ENCODE measurements at regions of chr18 and their contacts with region 1.

Region 1: GRCh38 chr18:35158728-35159450 is 81.9 kb upstream of the ZNF397 start:
- DNase-seq: peak; percentile 77
- H3K4me3 Mint-ChIP-seq: peak overlapping the region; percentile 30
- H3K27ac Mint-ChIP-seq: peak overlapping the region; percentile 88
- H3K4me1 Mint-ChIP-seq: peaks cover 24% of the 10 kb centered on the region
- H3K27me3 Mint-ChIP-seq: no peaks in the 10 kb centered on the region

Region 2: DNA sequence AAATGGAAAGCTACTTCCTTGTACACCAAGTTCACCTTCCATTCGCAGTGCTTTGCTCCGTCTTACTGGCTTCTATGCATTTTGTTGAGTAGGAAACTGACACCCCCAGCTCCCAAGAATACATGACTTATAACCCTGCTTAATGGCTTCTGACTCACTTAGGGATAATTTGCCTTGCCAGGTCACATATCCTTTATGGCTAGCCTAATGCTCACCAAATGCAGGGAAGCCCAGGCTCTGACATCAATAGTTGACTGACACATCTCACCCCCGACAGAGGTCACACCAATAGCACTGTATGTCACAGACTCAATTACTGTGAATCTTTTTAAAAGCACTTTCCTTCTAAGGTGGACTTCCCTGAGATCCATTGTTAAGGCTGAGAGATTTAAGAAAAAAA is 301.6 kb before region 1 on chr18:
- intact Hi-C with region 1: loop called (anchors 1 kb)
- DNase-seq: no peak
- H3K4me3 Mint-ChIP-seq: no peak overlapping the region
- H3K27ac Mint-ChIP-seq: no peak overlapping the region
- H3K4me1 Mint-ChIP-seq: peaks cover 7% of the 10 kb centered on the region
- H3K27me3 Mint-ChIP-seq: peaks cover 32% of the 10 kb centered on the region

Region 3: DNA sequence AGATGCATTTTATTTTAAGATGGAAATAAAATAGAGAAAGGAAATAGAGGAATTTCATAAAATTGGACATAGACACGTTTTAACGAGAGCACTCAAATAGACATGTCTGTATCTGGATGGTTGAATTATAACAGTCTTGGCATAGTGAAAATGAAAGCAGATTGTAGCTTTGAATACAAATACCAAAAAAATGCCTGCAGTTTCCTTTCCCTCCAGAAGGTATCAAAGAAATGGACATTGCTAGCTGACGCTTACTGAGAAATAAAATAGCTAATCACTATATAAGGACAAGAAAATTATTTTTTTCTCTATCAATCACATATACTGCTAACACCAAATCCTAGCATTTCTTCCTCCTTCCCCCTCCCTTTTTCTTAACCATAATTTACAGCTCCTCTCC is 129.1 kb before region 1 on chr18:
- intact Hi-C with region 1: loop called (anchors 5 kb)
- DNase-seq: no peak
- H3K4me3 Mint-ChIP-seq: peak overlapping the region; percentile 89
- H3K27ac Mint-ChIP-seq: peak overlapping the region; percentile 97
- H3K4me1 Mint-ChIP-seq: peaks cover 40% of the 10 kb centered on the region
- H3K27me3 Mint-ChIP-seq: no peaks in the 10 kb centered on the region

Region 4: DNA sequence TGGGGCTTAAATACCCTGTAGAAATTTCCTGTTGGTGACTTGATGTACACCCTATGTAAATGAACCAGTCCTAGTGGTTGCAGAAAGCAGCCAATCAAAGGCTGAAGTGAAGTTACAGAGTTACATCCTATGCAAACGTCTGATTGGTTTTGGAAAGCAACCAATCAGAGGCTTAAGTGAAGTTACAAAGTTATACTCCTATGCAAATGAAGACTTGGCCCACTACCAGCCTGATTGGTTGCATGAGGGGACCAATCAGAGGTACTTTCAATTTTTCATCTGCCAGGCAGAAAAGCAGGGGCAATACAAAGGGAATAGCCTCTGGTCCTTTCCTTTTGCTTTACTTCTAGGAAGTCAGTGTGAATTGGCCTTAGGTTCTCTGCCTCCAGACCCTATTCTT is 68.4 kb after region 1 on chr18:
- intact Hi-C with region 1: no loop called
- DNase-seq: no peak
- H3K4me3 Mint-ChIP-seq: no peak overlapping the region
- H3K27ac Mint-ChIP-seq: no peak overlapping the region
- H3K4me1 Mint-ChIP-seq: peaks cover 3% of the 10 kb centered on the region
- H3K27me3 Mint-ChIP-seq: peaks cover 16% of the 10 kb centered on the region

Measured in activated CD4-positive, alpha-beta T cell treated with anti-CD3 and anti-CD28 coated beads, Interleukin-2, amount 10 ng/mL, durations not matched to agents 24 days and 14 days (primary cell).